ENCODE measurements at regions of chr3 and their contacts with region 1.

Region 1: DNA sequence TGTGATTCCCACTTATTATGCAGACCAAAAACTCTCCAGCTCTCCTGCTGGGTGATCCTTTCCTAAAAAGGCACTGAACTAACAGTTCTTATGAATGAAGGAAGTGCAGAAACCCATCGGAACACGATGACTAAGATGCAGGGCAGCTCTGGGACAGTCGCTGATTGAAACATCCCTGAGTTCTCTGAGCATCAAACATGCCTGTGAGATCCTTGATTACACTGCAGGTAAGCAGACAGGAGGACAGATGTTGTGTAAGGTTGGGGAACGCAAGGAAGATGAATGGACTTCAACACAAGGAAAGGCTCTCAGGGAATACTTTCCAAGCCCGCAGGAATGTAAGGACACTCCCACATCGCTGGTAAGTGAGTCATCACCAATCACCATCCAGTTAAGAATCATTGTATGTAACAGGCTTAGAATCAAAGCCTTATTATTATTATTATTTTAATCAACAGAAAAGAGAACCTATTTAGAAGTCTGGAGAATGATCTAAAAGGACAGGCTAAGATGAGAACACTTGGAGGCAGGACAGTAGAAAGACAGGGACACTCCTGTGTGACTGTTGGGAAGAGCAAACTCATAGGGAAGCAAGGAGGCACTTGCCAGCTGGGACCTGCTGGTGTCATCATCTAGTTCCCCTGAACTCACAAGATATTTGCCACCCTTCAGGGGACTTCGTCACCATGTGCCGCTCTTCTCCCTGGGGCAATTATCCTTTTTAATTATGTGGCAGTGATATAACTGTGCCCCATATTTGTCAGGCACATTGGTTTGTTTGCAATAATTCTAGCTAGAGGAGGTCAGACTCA is 26.0 kb downstream of the TMEM158 start:
- DNase-seq: peak; percentile 72 to 97
- H3K4me3 ChIP-seq: no peak overlapping the region
- H3K27ac ChIP-seq: peak overlapping the region; percentile 92
- H3K4me1 ChIP-seq: peaks cover 32% of the 10 kb centered on the region
- H3K27me3 ChIP-seq: no peaks in the 10 kb centered on the region
- CTCF ChIP-seq: no peak

Region 2: DNA sequence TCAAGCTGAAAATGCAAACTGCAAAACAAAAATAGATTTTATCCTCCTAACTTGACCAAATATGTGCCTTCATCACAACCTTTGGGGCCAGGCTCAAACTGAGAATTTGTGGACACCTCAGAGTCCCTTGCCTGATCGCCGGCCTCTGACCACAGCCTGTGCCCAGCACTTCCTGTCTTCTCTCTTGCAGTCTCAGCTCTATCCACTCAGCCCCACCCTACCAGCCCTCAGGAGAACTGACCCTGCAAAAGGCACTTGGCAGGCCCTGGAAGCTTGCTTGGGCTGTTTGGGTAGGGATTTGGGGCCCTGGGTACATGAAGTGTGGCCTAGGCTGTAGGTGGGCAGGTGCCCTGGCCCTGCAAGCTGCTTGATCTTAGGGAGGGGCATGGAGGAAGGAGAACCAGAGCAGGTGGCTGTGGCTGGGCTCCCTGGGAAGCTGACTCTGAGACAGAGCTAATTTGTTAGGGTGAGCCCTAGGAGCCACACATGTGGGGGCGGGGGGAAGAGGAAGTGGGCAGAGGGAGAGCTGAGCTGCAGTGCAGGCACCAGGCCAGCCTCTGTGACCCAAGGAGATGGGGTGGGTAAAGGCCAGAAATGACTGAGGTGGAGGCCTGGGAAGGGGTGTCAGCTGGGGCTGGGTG is 165.3 kb before region 1 on chr3:
- CTCF ChIA-PET with region 1: no interaction called
- POLR2A ChIA-PET with region 1: no interaction called
- intact Hi-C with region 1: no loop called
- DNase-seq: peak in 1 of 2 experiments; percentile 17
- H3K4me3 ChIP-seq: no peak overlapping the region
- H3K27ac ChIP-seq: no peak overlapping the region
- H3K4me1 ChIP-seq: peaks cover 7% of the 10 kb centered on the region
- H3K27me3 ChIP-seq: no peaks in the 10 kb centered on the region
- CTCF ChIP-seq: no peak

Region 3: DNA sequence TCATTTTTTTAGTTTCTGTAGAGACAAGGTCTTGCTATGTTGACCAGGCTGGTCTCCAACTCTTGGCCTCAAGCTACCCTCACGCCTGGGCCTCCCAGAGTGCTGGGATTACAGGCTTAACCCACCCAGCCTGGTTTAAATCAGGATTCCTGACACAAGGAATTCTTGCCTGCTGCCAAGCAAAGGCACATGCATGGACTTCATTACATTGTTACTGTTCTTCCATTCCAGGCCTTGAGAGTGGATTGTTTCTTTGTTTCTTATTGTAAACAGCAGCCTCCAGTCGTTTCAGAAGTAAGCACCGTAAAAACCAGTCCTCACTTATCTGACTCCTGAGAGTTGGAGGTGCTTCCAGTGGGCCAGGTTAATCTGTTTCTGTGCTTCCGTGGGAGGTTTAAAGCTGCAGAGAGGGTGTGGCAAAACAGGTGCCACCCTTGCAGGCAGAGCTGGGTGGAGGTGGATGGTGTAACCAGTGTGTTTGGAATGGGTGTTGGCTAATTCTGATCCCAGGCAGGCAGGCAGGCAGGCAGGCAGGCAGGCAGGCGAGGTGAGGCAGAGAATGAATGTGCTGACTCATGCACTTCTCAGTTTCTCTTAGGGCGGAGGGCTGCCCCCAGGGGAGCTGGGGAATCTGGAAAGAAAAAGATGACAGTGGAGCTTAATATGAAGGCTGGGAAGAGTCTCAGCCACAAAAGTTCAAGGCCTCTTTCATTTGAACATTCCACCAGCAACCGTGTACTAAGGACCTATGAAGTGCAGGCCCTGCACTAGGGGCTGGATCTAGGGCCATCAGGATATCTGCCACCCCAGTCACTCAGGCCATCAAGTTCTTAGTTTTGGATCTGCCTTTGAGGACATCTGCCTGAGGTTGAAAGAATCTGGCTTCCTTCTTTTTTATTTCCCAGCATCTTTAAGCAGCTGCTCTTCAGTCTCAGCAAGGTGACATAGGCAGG is 16.9 kb before region 1 on chr3:
- CTCF ChIA-PET with region 1: no interaction called
- POLR2A ChIA-PET with region 1: interaction called, 3 read pairs
- intact Hi-C with region 1: loop called (anchors 1 kb)
- DNase-seq: peak; percentile 89 to 94
- H3K4me3 ChIP-seq: peak overlapping the region; percentile 34; the same call in 1 of the 2 replicates
- H3K27ac ChIP-seq: peak overlapping the region; percentile 98
- H3K4me1 ChIP-seq: peaks cover 40% of the 10 kb centered on the region
- H3K27me3 ChIP-seq: no peaks in the 10 kb centered on the region
- CTCF ChIP-seq: no peak

Measured in PC-9 (cell line).